AG04449 (cell line): ENCODE measurements at regions of chrX and their contacts with region 1.

Region 1: DNA sequence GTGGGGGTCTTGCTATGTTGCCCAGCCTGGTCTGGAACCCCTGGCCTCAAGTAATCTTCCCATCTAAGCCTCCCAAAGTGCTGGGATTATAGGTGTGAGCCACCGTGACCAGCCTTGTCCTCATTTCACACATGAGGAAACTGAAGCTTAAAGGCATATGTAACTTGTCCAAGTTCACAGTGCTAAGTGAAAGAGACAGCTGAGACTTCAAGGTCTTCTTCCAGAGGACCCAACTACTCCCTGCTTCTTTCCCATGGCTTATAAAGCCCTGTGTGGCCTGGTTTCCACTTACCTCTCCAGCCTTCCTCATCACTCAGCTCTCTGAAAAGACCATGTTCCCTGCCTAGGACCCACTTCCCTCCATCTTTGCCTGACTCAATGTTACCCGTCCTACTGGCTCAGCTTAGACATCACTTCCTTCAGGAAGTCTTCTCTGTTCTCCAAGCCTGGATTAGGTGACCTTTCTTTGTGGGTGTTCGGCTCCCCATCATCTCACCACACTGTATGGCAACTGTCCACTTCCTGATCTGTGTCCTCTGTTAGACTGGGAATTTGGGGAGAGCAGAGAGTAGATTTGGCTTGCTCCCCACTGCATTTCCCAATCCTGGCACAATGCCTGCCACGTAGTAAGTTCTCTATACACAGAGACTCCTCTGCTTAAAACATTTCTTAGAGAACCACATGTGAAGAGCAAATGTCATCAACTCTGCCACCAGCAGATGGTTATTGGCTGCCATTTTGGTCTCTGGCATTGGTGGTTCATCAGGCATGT is 30.4 kb upstream of the LAMP2 start:
- DNase-seq: no peak
- H3K4me3 ChIP-seq: no peak overlapping the region
- CTCF ChIP-seq: no peak

Region 2: GRCh38 chrX:120512627-120513026 is 13.1 kb after region 1 on chrX:
- CTCF ChIA-PET with region 1: no interaction called
- POLR2A ChIA-PET with region 1: no interaction called
- DNase-seq: no peak
- H3K4me3 ChIP-seq: no peak overlapping the region
- CTCF ChIP-seq: no peak

Region 3: DNA sequence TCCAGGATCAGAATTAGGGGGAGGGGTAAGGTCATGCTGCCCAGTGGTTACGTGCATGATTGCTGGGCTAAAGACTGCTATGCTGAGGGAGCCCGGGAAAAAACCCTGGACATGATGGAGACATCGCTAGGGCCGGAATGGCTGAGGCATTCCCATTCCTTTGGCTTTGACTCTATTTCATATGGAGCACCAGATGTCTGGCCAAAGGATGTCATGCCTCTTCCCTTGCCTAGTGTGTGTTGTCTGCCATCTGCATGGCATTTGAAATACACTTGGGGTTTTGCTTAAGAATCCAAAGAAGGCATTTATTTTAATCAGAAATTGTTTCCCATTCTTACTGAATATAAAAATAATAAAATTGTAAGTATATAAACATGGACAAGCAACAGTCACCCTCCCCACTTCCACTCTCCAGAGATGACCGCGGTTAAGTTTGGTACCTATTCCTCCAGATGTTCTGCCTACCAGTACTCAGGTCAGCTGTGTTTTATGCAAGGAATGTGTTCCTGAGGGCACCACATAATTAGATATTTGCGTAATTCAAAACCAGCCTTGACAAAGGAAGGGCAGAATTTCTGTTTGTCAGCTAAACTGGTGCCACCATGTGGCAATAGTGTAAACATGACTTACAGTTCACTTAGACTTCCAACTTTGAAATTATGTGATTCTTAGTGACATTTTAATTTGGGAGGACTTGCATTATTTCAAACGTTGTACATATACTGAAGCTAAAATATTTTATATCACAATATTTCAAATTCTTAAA is 270.3 kb after region 1 on chrX:
- CTCF ChIA-PET with region 1: interaction called, 12 read pairs
- POLR2A ChIA-PET with region 1: no interaction called
- DNase-seq: no peak
- H3K4me3 ChIP-seq: no peak overlapping the region
- CTCF ChIP-seq: peak; percentile 21